ENCODE measurements at regions of chr16 and their contacts with region 1.

Region 1: DNA sequence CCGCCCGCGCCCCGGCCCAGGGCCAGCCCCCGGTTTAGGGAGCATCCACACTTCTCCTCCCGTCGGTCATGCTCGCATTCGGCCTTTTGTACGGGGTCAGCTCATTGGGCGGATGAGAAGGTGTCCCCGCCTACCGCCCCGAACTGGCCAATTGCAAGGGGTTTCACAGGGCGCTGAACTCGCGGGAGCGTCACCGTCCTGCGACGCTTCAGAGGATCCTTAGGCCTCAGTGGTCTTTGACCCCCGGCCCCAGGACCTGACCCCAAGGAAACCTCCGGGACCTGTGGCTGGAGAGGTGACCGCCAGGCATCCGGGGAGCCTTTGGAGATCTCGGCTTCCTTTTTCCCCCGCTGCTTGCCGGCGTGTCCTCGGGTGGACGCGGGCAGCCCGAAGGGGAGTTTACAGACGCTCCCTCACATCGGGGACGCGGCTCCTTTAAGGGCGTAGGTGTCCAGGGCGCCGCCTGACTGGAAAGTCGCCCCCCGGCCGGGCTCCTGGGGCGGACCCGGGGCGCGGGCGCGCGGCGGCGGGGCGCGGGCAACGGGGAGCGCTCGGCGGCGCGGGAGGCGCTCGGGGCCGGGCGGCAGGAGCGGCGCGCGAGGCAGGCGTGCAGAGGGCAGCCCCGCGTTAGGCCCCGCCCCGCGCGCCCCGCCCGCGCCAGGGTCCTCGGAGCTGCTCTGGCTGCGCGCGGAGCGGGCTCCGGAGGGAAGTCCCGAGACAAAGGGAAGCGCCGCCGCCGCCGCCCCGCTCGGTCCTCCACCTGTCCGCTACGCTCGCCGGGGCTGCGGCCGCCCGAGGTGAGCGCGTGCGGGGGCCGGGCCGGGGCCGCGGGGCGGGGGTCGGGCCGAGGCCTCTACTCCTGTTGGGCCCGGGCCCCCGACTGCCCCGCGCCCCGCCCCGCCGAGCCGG is at the start of gene UBE2I:
- DNase-seq: peak; percentile 94 to 100 (median 97)
- ATAC-seq: peak; percentile 71
- H3K4me3 ChIP-seq: peak within 1 kb of the TSS; percentile 89
- H3K4me3 Mint-ChIP-seq: peak within 1 kb of the TSS; percentile 97
- H3K27ac ChIP-seq: peak within 1 kb of the TSS; percentile 96 to 99
- H3K27ac Mint-ChIP-seq: peak within 1 kb of the TSS; percentile 100
- H3K4me1 ChIP-seq: peaks cover 68% of the 10 kb centered on the region
- H3K4me1 Mint-ChIP-seq: peaks cover 38% of the 10 kb centered on the region
- H3K27me3 ChIP-seq: no peaks in the 10 kb centered on the region
- H3K27me3 Mint-ChIP-seq: no peaks in the 10 kb centered on the region
- CTCF ChIP-seq: no peak
- total RNA-seq, gene UBE2I: 247 to 252 TPM

Region 2: DNA sequence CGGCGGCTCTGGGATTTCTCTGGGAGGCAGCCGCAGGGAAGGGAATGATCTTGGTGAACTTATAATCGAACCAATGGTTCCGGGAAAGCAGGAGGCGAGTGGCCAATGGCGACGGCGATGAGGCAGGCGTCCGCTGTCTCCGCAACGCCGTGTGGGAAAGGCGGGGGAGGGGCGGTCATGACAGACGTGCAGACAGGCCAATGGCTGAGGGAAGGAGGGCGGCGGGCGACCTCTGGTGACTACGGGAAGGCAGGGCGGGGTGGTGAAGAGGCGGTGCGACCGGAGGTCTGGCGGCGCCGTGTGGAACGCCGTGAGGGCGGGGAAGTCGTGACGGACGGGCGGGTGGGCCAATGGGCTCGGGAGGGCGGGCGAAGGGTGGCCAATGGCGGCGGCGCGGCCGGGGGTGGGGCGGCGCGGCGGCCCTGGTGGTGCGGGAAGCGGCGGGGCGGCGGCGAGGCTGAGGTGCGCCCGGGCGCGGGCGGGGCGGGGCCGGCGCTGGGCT is 719.5 kb before region 1 on chr16 and contains the start of gene RAB40C:
- CTCF ChIA-PET with region 1: no interaction called
- POLR2A ChIA-PET with region 1: no interaction called
- intact Hi-C with region 1: loop called in 1 of 2 experiments (anchors 2 kb)
- DNase-seq: peak; percentile 98 to 100 (median 99)
- ATAC-seq: peak; percentile 80
- H3K4me3 ChIP-seq: peak within 1 kb of the TSS; percentile 80
- H3K4me3 Mint-ChIP-seq: peak within 1 kb of the TSS; percentile 98
- H3K27ac ChIP-seq: peak within 1 kb of the TSS; percentile 84 to 88
- H3K27ac Mint-ChIP-seq: peak within 1 kb of the TSS; percentile 95
- H3K4me1 ChIP-seq: peaks cover 42% of the 10 kb centered on the region
- H3K4me1 Mint-ChIP-seq: peaks cover 16% of the 10 kb centered on the region
- H3K27me3 ChIP-seq: no peaks in the 10 kb centered on the region
- H3K27me3 Mint-ChIP-seq: no peaks in the 10 kb centered on the region
- CTCF ChIP-seq: no peak
- total RNA-seq, gene RAB40C: 8.9 to 9.5 TPM

Region 3: DNA sequence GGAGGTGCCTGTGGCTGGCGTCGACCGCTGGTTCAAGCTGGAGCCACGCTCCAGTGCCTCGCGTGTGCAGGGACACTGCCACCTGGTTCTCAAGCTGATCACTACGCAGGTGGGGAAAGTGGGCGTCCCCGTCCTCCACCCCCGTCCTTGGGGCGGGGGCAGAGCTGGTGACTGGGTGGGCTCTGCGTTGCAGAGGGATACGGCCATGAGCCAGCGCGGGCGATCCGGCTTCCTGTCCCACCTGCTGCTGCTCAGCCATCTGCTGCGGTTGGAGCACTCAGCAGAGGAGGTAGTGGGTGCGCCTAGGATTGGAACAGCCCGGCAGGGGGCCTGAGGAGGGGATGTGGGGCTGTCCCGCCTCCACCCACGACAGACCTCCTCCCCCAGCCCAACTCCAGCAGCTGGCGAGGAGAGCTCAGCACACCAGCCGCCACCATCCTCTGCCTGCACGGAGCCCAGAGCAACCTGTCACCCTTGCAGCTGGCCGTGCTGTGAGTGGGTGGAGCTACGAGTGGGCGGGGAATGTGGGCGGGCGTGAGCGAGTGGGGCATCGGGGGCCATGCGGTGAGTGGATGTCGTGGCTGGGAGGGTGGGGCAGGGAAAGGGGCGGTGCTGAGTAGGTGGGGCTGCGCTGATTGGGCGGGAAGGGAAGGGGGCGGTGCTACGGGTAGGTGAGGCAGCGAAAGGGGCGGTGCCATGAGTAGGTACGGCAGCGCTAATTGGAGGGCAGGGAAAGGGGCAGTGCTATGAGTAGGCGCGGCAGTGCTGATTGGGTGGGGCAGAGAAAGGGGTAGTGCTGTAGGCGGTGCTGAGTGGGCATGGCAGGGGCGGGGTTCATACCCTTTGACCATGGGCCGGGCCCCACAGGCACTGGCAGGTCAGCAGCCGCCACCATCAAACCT is 33.5 kb after region 1 on chr16:
- CTCF ChIA-PET with region 1: no interaction called
- POLR2A ChIA-PET with region 1: interaction called, 24 read pairs
- intact Hi-C with region 1: loop called (anchors 2 kb)
- DNase-seq: peak; percentile 92 to 99 (median 96)
- ATAC-seq: peak; percentile 93
- H3K4me3 ChIP-seq: peak overlapping the region; percentile 53
- H3K4me3 Mint-ChIP-seq: peak overlapping the region; percentile 66
- H3K27ac ChIP-seq: peak overlapping the region in 1 of 2 donors; percentile 29
- H3K27ac Mint-ChIP-seq: peak overlapping the region; percentile 50
- H3K4me1 ChIP-seq: peaks cover 26% of the 10 kb centered on the region
- H3K4me1 Mint-ChIP-seq: peaks cover 13% of the 10 kb centered on the region
- H3K27me3 ChIP-seq: no peaks in the 10 kb centered on the region
- H3K27me3 Mint-ChIP-seq: no peaks in the 10 kb centered on the region
- CTCF ChIP-seq: no peak

Region 4: DNA sequence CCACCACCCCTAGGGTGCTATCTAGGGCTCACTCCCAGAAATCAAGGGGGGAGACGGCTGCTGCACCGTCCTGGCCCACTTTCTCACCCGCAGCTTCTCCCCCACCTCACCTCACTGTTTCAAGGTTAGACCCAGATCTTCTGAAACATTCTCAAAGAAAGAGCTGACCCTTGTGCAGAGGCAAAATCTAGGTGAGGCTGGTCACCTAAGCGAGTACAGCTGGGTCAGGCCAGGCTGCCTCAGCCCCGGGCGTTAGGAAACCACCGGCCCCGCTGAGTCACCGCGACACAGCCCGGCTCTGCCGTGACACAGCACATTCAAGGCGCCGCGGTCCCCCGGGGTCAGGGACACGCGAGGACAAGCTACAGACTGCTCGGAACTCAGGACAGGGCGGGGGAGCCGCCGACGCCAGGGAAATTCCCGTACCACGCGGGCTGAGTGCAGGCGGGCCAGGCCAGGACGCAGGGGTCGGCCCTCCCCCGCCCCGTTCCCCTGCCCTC is 69.6 kb after region 1 on chr16:
- CTCF ChIA-PET with region 1: no interaction called
- POLR2A ChIA-PET with region 1: no interaction called
- intact Hi-C with region 1: no loop called
- DNase-seq: peak in 12 of 14 experiments; percentile 7 to 90 (median 38)
- ATAC-seq: peak; percentile 60
- H3K4me3 ChIP-seq: peak overlapping the region; percentile 26
- H3K4me3 Mint-ChIP-seq: no peak overlapping the region
- H3K27ac ChIP-seq: no peak overlapping the region
- H3K27ac Mint-ChIP-seq: no peak overlapping the region
- H3K4me1 ChIP-seq: peaks cover 23% of the 10 kb centered on the region
- H3K4me1 Mint-ChIP-seq: peaks cover 9% of the 10 kb centered on the region
- H3K27me3 ChIP-seq: no peaks in the 10 kb centered on the region
- H3K27me3 Mint-ChIP-seq: no peaks in the 10 kb centered on the region
- CTCF ChIP-seq: no peak

Region 5: DNA sequence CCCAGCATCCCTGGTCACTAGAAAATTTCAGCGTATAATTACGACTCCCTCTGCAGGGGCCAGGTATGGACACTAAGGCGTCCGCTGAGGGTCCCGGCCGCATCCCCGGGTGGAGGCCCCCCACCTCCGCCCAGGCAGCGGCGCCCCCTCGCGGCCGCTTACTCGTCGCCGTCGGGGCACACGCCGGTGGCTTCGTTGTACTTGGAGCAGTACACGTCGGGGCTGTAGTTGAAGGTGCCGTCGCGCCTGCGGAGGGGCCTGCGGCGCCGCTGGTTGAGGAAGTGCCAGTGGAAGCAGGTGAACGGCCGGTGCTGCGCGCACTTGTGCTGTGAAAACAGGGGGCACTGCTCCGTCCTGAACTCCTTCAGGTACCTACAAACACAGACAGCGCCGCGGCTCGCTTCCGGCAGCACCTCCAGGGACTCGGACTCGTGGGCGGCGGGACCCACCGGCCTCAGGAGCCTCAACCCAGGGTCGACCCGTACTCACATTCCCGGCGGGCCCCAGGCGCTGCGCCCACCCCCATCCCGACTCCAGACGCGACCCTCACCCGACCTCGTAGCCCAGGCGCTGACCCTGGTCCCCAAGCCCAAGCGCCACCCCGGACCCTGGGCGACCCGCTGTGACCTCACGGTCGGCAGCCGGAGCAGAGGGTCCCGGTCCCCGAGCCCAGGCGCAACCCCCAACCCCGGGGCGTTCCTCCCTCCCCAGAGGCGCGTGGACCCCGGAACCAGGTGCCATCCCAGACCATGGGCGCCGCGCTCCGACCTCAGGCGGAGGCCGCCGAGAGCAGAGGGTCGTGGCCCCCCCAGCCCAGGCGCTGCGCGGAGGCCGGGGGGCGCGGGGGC is 104.7 kb after region 1 on chr16:
- CTCF ChIA-PET with region 1: no interaction called
- POLR2A ChIA-PET with region 1: no interaction called
- intact Hi-C with region 1: loop called in 1 of 2 experiments (anchors 2 kb)
- DNase-seq: peak; percentile 45 to 82 (median 62)
- ATAC-seq: peak; percentile 63
- H3K4me3 ChIP-seq: peak overlapping the region; percentile 77
- H3K4me3 Mint-ChIP-seq: peak overlapping the region; percentile 90
- H3K27ac ChIP-seq: peak overlapping the region in 1 of 2 donors; percentile 77
- H3K27ac Mint-ChIP-seq: peak overlapping the region; percentile 85
- H3K4me1 ChIP-seq: peaks cover 29% of the 10 kb centered on the region
- H3K4me1 Mint-ChIP-seq: peaks cover 21% of the 10 kb centered on the region
- H3K27me3 ChIP-seq: no peaks in the 10 kb centered on the region
- H3K27me3 Mint-ChIP-seq: no peaks in the 10 kb centered on the region
- CTCF ChIP-seq: peak; percentile 65

Region 6: DNA sequence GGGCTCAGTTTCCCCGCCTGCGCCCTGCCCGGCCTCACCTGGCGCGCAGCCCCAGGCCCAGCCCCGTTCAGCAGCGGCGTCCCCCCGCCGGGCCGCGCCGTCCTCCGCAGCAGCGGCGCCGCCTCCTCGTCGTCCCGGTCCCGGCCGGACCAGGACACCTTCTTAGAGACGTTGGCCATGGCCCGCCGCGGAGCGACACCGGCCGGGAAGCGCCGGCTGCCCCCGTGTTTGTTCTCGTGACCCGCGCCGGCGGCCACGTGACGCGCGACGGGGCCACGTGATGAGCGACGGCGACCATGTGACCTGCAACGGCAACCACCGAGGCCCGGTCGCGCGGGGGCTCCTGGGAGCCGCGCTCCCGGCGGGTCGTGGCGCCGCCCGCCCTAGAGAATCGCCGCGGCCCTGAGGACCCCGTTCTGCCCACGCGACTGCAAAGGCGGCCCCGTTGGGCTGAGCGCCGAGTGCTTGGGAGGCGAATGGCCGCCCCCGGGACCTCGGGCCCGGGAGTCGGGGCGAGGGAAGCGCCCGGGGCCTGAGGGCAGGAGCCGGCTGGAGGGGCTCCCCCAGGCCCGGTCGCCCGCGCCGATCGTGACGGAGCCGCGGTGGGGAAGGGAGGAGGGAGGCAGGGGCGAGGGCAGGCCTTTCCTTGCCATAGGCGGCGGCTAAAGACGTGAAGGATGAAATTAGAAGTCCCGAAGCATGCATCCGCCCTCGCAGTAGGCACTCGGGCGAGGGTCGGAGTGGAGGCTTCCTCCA is 165.7 kb after region 1 on chr16 and contains the start of gene CLCN7:
- CTCF ChIA-PET with region 1: no interaction called
- POLR2A ChIA-PET with region 1: no interaction called
- intact Hi-C with region 1: loop called in 1 of 2 experiments (anchors 10 kb)
- DNase-seq: peak; percentile 70 to 94 (median 84)
- ATAC-seq: peak; percentile 87
- H3K4me3 ChIP-seq: peak within 1 kb of the TSS; percentile 62
- H3K4me3 Mint-ChIP-seq: peak within 1 kb of the TSS; percentile 88
- H3K27ac ChIP-seq: peak within 1 kb of the TSS; percentile 72 to 84
- H3K27ac Mint-ChIP-seq: peak within 1 kb of the TSS; percentile 89
- H3K4me1 ChIP-seq: peaks cover 41% of the 10 kb centered on the region
- H3K4me1 Mint-ChIP-seq: peaks cover 43% of the 10 kb centered on the region
- H3K27me3 ChIP-seq: no peaks in the 10 kb centered on the region
- H3K27me3 Mint-ChIP-seq: no peaks in the 10 kb centered on the region
- CTCF ChIP-seq: no peak
- total RNA-seq, gene CLCN7: 70.5 to 76.2 TPM

Region 7: GRCh38 chr16:1610276-1611017 is 301.2 kb after region 1 on chr16:
- CTCF ChIA-PET with region 1: no interaction called
- POLR2A ChIA-PET with region 1: no interaction called
- intact Hi-C with region 1: loop called in 1 of 2 experiments (anchors 2 kb)
- DNase-seq: peak; percentile 85 to 96 (median 90)
- ATAC-seq: peak; percentile 65
- H3K4me3 ChIP-seq: peak overlapping the region; percentile 53
- H3K4me3 Mint-ChIP-seq: peak overlapping the region; percentile 72
- H3K27ac ChIP-seq: peak overlapping the region; percentile 45 to 46
- H3K27ac Mint-ChIP-seq: peak overlapping the region; percentile 89
- H3K4me1 ChIP-seq: peaks cover 44% of the 10 kb centered on the region
- H3K4me1 Mint-ChIP-seq: peaks cover 24% of the 10 kb centered on the region
- H3K27me3 ChIP-seq: peaks cover 6 to 10% of the 10 kb centered on the region in 2 experiments
- H3K27me3 Mint-ChIP-seq: peaks cover 14% of the 10 kb centered on the region
- CTCF ChIP-seq: no peak

Region 8: DNA sequence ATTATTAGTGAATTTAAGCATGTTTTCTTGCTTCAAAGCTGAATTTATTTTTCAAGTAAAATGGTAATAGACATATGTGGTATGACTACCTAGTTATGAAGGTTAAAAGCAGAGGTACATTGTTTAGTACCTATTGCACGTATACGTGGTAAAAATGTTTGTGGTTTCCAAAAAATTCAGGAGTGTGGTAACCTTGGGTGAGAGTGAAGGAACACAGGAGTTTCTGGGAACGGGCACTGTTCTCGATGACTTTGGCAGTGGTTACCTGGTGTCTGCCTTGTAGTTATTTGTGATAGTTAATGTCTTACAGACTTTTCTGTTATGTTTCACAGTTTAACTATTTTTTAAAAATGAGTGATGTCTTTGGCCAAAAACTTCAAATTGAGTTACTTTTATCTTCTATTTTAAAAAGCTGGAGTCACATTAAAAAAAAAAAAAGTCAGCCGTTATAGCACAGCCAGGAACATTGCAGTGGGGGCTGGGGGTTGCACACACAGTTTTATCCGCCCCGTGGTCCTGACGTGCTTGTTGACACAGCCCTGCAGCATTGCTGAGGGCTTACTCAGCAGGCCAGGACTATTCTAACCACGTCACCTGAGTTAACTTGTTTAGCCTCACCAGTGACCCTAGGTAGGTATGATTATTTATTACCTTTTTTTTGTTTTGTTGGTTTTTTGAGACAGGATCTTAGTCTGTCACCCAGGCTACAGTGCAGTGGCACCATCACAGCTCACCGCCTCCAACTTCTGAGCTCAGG is 379.8 kb after region 1 on chr16:
- CTCF ChIA-PET with region 1: no interaction called
- POLR2A ChIA-PET with region 1: no interaction called
- intact Hi-C with region 1: no loop called
- DNase-seq: no peak
- ATAC-seq: no peak
- H3K4me3 ChIP-seq: no peak overlapping the region
- H3K4me3 Mint-ChIP-seq: no peak overlapping the region
- H3K27ac ChIP-seq: no peak overlapping the region
- H3K27ac Mint-ChIP-seq: no peak overlapping the region
- H3K4me1 ChIP-seq: no peaks in the 10 kb centered on the region
- H3K4me1 Mint-ChIP-seq: peaks cover 4% of the 10 kb centered on the region
- H3K27me3 ChIP-seq: no peaks in the 10 kb centered on the region
- H3K27me3 Mint-ChIP-seq: no peaks in the 10 kb centered on the region
- CTCF ChIP-seq: no peak

Region 9: DNA sequence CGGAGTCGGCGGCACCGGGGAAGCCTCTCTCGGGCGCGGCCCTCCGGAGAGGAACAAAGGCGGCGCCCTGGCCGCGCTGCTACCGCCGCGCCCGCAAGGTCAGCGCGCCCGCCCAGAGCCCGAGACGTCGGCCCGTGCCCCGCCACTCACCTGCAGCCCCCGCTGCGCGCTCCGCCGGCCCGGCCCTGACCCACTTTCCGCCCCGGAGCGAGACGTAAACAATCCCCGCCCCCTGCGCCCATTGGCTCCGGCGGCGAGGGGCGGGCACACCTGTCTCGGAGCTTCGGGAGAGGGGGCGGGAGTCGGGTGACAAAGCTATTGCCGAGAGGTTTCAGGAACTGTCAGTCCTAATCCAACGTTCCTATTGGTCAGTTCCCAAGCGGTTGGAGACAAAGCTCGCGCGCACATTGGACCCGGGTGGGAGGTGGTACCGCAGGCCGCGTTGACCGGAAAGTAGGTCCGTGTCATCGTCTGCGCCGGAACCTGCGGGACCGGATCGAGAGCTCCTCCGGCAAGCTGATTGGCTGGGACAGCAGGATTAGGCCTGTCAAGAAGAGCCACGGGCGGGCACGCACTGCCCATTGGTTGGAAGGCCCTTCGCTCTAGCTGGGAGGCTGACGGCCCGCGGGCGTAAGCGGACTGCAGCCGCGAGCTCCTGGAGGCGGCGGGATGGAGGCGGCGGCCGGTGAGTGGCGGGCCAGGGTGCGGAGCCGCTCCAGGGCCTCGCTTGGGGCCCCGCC is 473.3 kb after region 1 on chr16 and contains the starts of genes NUBP2 and SPSB3:
- CTCF ChIA-PET with region 1: no interaction called
- POLR2A ChIA-PET with region 1: interaction called, 15 read pairs
- intact Hi-C with region 1: loop called in 1 of 2 experiments (anchors 10 kb)
- DNase-seq: peak; percentile 93 to 100 (median 97)
- ATAC-seq: peak; percentile 84
- H3K4me3 ChIP-seq: peak within 1 kb of the TSS; percentile 88
- H3K4me3 Mint-ChIP-seq: peak within 1 kb of the TSS; percentile 95
- H3K27ac ChIP-seq: peak within 1 kb of the TSS; percentile 69 to 74
- H3K27ac Mint-ChIP-seq: peak within 1 kb of the TSS; percentile 96
- H3K4me1 ChIP-seq: peaks cover 61% of the 10 kb centered on the region
- H3K4me1 Mint-ChIP-seq: peaks cover 26% of the 10 kb centered on the region
- H3K27me3 ChIP-seq: no peaks in the 10 kb centered on the region
- H3K27me3 Mint-ChIP-seq: no peaks in the 10 kb centered on the region
- CTCF ChIP-seq: no peak
- total RNA-seq, gene NUBP2: 36.4 to 38.1 TPM
- total RNA-seq, gene SPSB3: 86.3 to 87.6 TPM

Measured in CD4-positive, alpha-beta T cell (primary cell).